ENCODE measurements at regions of chr11 and their contacts with region 1.

Region 1: DNA sequence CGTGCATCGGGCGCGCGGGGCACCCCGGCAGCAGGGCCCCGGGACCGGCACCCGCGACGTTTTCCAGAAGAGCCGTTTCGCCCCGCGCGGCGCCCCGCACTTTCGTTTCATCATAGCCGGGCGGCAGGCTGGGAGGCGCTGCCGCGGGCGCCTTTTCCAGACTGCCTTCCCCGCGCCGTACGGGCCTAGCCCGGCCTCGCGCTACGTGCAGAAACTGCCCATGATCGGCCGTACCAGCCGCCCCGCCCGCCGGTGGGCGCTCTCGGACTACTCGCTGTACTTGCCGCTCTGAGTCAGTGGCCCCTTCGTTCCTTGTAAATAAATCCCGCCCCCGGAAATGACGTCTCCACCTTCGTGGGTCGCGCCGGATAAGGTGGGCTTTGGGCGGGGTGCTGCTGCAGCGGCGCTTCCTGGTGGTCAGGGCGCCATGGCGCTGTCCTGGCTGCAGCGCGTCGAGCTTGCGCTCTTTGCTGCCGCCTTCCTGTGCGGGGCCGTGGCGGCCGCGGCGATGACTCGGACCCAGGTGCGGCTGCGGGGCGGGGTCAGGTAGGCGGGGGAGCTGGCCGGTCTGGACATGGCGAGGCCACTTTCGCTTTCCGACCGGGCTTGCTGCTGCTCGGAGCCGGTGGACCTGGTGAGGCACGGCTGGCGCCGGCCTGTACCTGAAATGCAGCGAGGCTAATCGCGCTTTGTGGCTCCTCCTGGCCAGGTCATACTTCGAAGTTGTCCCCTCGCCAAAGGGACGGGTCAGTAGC is at the start of gene TMEM179B:
- DNase-seq: peak; percentile 96
- CTCF ChIP-seq: peak; percentile 65

Region 2: GRCh38 chr11:62461740-62462507 is 325.3 kb before region 1 on chr11:
- CTCF ChIA-PET with region 1: no interaction called
- POLR2A ChIA-PET with region 1: no interaction called
- DNase-seq: no peak
- CTCF ChIP-seq: no peak

Region 3: GRCh38 chr11:62694455-62695167 is 92.6 kb before region 1 on chr11:
- CTCF ChIA-PET with region 1: no interaction called
- POLR2A ChIA-PET with region 1: no interaction called
- DNase-seq: peak; percentile 82
- CTCF ChIP-seq: peak; percentile 84

Region 4: GRCh38 chr11:62737196-62737595 is 50.0 kb before region 1 on chr11:
- CTCF ChIA-PET with region 1: no interaction called
- POLR2A ChIA-PET with region 1: no interaction called
- DNase-seq: no peak
- CTCF ChIP-seq: no peak

Region 5: DNA sequence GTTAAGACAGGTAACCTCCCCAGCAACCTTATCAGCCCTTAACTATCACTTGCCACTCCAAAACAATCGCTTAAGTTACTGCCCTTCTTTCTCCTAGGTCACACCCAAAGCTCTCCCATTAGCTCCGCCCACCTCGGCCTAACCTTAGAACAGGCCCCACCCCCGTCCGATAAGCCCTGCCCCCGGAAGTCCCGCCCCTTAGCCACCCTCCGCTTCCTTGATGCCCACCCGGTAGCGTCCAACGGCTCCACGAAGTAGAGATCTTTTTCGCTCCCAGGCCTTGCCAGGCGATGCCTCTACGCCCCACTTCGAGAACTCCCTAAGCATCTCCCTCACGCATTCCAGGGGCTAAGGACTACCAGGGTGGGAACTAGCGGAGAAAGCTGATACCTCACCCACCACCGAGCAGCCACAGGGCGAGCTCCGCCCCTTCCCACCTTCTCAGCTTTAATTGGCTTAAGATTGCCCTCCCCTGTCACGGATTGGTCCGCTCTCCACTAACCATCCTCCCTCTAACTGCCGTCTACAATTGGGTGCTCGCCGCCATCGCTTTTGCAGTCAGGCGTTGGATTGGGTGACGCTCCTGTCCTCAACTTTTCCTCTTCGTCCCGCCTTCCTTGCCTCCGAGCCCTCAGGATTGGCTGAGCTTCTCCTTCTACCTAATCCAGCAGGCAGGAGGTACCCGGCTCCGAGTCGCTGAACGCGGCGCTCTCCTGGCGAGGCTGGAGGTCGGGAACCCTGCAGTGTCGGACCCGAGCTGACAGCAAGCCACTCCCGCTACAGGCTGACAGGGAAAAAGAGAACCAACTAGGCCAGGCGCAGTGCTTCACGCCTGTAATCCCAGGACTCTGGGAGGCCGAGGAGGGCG is 33.2 kb before region 1 on chr11 and contains the start of gene ZBTB3:
- CTCF ChIA-PET with region 1: interaction called, 36 read pairs
- POLR2A ChIA-PET with region 1: interaction called, 10 read pairs
- DNase-seq: peak; percentile 96
- CTCF ChIP-seq: no peak

Region 6: GRCh38 chr11:62799486-62799885 is 12.3 kb after region 1 on chr11:
- CTCF ChIA-PET with region 1: interaction called, 40 read pairs
- POLR2A ChIA-PET with region 1: interaction called, 28 read pairs
- DNase-seq: no peak
- CTCF ChIP-seq: no peak

Region 7: DNA sequence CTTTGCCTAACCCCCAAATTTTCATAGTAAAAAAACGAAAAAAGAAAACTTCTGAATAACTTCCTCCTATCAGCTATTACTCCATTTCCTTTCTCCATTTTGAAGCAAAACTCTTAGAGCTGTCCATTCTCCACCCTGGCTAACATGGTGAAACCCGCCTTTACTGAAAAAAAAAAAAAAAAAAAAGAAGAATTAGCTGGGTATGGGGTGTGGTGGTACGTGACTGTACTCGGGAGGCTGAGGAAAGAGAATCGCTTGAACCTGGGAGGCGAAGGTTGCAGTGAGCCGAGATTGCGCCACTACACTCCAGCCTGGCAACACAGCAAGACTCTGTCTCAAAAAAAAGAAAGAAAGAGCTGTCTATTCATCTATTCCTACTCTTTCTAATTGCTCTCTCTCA is 29.4 kb after region 1 on chr11:
- CTCF ChIA-PET with region 1: interaction called, 13 read pairs
- POLR2A ChIA-PET with region 1: interaction called, 3 read pairs
- DNase-seq: no peak
- CTCF ChIP-seq: no peak

Region 8: DNA sequence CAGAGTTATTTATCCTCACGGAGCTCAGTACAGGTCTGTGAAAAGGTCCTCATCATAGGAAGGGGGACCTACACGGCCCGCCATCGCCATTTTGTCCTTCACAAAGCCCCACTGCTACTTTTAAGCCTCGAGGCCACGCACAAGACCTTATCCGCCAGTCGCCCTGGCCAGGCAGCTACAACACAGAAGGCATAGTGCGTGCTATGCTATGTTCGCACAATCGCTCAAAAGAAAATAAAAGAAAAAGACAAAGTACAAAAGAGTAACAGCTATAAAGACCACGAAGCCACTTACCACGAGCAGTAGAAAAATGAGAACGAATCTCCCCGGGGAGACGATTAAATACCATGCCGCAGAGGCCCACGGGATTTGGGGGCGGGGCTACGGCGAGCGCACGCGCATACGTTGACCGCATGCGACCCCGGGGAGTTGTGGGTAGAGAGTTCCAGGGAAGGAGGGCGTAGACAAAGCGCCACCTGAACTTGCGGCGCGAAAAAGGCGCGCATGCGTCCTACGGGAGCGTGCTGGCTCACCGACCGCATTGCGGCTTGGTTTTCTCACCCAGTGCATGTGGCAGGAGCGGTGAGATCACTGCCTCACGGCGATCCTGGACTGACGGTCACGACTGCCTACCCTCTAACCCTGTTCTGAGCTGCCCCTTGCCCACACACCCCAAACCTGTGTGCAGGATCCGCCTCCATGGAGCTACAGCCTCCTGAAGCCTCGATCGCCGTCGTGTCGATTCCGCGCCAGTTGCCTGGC is 68.6 kb after region 1 on chr11:
- CTCF ChIA-PET with region 1: interaction called, 62 read pairs
- POLR2A ChIA-PET with region 1: interaction called, 25 read pairs
- DNase-seq: peak; percentile 96
- CTCF ChIP-seq: no peak

Region 9: DNA sequence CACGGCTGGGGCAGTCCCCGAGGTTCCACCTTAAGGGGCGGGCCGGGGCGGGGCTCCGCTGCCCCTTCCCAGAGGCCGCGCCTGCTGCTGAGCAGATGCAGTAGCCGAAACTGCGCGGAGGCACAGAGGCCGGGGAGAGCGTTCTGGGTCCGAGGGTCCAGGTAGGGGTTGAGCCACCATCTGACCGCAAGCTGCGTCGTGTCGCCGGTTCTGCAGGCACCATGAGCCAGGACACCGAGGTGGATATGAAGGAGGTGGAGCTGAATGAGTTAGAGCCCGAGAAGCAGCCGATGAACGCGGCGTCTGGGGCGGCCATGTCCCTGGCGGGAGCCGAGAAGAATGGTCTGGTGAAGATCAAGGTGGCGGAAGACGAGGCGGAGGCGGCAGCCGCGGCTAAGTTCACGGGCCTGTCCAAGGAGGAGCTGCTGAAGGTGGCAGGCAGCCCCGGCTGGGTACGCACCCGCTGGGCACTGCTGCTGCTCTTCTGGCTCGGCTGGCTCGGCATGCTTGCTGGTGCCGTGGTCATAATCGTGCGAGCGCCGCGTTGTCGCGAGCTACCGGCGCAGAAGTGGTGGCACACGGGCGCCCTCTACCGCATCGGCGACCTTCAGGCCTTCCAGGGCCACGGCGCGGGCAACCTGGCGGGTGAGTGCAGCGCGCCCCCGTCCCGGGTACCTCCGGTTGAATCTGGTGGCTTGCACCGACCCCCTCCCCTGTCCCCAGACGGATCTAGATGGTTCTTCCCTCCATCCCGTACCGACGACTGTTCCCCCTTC is 93.8 kb after region 1 on chr11 and contains the start of gene SLC3A2:
- CTCF ChIA-PET with region 1: interaction called, 22 read pairs
- POLR2A ChIA-PET with region 1: interaction called, 6 read pairs
- DNase-seq: peak; percentile 91
- CTCF ChIP-seq: peak; percentile 80